ENCODE measurements at regions of chr7 and their contacts with region 1.

Region 1: DNA sequence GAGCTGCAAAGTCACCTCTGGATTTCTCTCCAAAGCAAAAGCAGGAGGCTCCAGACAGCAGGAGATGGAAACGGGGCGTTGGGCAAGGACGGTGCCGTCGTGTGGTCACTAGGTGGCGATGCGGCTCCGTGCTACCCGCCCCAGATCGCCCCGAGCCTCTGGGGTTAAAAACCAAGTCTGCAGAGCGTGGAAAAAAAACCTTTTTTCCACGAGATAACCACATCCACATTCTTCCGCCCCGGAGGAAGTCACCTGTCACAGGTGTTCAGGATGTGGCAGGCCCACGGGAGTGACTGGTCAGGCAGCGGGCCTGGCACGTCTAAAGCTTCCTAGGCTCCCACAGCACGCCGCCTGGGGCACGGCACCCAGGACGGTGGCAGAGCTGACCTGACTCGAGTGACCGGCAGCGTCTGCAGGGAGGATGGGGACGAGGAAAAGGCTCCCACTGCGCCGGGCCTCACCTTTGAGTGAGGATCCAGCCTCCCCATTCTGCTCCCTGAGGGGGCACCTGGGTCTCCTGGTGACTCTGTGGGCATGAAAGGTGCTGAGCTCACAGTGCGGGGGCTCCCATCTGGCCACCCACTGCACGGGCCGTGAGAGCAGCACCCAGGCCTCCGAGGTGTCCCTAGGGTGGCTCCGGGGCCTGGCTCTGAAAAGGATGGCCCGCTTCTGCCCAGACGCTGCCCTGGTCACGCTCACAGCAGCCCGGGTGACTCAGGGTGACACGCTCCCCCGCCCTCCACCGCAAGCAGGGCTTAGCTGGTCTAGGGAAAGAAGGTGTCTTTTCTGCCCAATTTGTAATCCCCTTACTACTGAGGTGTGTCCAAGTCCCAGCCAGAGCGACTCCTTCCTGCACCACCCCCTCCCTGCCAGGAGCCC is 71.3 kb upstream of the TNRC18 start:
- DNase-seq: peak; percentile 82
- H3K4me3 Mint-ChIP-seq: peak overlapping the region; percentile 39
- H3K27ac Mint-ChIP-seq: no peak overlapping the region
- H3K4me1 Mint-ChIP-seq: peaks cover 13% of the 10 kb centered on the region
- H3K27me3 Mint-ChIP-seq: no peaks in the 10 kb centered on the region
- CTCF ChIP-seq: peak; percentile 97

Region 2: DNA sequence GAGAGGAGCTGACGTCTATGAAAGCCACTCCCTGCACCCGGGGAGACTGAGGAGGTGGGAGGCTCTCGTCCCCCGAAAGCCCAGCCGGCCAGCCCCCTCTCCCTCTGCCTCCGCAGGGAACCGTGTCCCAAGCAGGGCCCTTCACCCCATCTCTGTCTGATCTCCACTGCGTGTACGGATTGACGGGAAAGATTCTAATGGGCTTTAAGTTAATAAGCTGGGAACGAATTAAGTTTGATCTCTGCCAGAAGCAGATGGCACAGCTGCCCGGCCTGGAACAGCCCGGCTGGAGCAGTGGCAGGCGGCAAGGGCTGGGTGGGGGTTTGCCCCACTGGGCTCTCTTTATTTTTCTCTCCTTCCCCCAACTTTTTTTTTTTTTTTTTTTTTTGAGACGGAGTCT is 218.3 kb before region 1 on chr7:
- CTCF ChIA-PET with region 1: no interaction called
- POLR2A ChIA-PET with region 1: no interaction called
- intact Hi-C with region 1: no loop called
- DNase-seq: no peak
- H3K4me3 Mint-ChIP-seq: no peak overlapping the region
- H3K27ac Mint-ChIP-seq: no peak overlapping the region
- H3K4me1 Mint-ChIP-seq: no peaks in the 10 kb centered on the region
- H3K27me3 Mint-ChIP-seq: peaks cover 11% of the 10 kb centered on the region
- CTCF ChIP-seq: no peak

Region 3: GRCh38 chr7:5351507-5352265 is 143.2 kb before region 1 on chr7:
- CTCF ChIA-PET with region 1: no interaction called
- POLR2A ChIA-PET with region 1: no interaction called
- intact Hi-C with region 1: no loop called
- DNase-seq: no peak
- H3K4me3 Mint-ChIP-seq: no peak overlapping the region
- H3K27ac Mint-ChIP-seq: no peak overlapping the region
- H3K4me1 Mint-ChIP-seq: peaks cover 12% of the 10 kb centered on the region
- H3K27me3 Mint-ChIP-seq: no peaks in the 10 kb centered on the region
- CTCF ChIP-seq: no peak

Region 4: DNA sequence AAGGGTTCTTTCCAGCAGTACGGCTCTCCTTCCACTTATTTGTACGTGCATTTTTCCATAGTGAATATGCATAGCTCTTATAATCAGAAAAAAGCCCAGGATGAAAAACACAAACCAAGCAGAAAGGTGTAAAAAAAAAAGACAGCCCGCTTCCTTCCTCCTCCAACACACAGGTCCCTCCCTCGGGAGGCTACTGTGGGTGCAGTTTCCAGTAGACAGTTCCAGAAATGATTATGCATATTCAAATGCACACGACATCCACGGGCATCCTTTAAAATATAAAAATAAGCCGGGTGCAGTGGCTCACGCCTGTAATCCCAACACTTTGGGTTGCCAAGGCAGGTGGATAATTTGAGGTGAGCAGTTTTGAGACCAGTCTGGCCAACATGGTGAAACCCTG is 131.2 kb before region 1 on chr7:
- CTCF ChIA-PET with region 1: interaction called, 10 read pairs
- POLR2A ChIA-PET with region 1: no interaction called
- intact Hi-C with region 1: no loop called
- DNase-seq: no peak
- H3K4me3 Mint-ChIP-seq: no peak overlapping the region
- H3K27ac Mint-ChIP-seq: no peak overlapping the region
- H3K4me1 Mint-ChIP-seq: no peaks in the 10 kb centered on the region
- H3K27me3 Mint-ChIP-seq: no peaks in the 10 kb centered on the region
- CTCF ChIP-seq: no peak

Region 5: DNA sequence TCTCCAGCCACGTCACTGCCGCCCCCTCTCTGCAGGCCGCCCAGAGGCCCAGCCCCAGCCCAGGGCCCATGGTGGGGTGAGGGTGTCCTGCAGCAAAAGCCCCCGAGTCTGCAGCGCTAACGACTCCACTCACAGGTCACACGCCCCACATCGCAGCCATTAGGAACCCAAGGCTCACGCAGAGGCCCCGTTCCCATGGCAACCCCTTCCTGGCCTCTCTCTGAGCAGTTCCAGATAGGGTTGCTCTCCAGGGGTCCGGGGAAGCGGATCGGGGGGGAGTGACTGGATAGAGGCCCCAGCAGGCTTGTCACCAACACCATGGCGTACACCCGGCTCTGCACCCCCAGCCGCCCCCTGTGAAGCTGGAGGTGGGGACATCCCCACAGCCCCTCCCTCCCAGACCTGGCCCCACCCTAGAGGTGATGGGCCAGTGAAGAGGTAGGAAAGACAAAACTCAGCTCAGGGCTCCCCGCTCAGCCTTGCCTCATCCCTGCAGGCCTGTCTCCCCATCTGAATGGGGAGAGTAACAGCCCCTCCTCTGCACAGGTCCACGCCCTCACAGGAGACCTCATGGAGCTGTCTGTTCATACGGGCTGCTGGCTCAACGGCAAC is 112.5 kb before region 1 on chr7:
- CTCF ChIA-PET with region 1: no interaction called
- POLR2A ChIA-PET with region 1: no interaction called
- intact Hi-C with region 1: no loop called
- DNase-seq: no peak
- H3K4me3 Mint-ChIP-seq: no peak overlapping the region
- H3K27ac Mint-ChIP-seq: no peak overlapping the region
- H3K4me1 Mint-ChIP-seq: peaks cover 7% of the 10 kb centered on the region
- H3K27me3 Mint-ChIP-seq: no peaks in the 10 kb centered on the region
- CTCF ChIP-seq: no peak

Region 6: GRCh38 chr7:5526100-5526905 is 31.4 kb after region 1 on chr7:
- CTCF ChIA-PET with region 1: interaction called, 11 read pairs
- POLR2A ChIA-PET with region 1: interaction called, 10 read pairs
- intact Hi-C with region 1: no loop called
- DNase-seq: peak; percentile 81
- H3K4me3 Mint-ChIP-seq: peak overlapping the region; percentile 35
- H3K27ac Mint-ChIP-seq: peak overlapping the region; percentile 91
- H3K4me1 Mint-ChIP-seq: peaks cover 31% of the 10 kb centered on the region
- H3K27me3 Mint-ChIP-seq: no peaks in the 10 kb centered on the region
- CTCF ChIP-seq: peak; percentile 16

Region 7: GRCh38 chr7:5557920-5558401 is 63.0 kb after region 1 on chr7:
- CTCF ChIA-PET with region 1: interaction called, 5 read pairs
- POLR2A ChIA-PET with region 1: interaction called, 7 read pairs
- intact Hi-C with region 1: loop called (anchors 1 kb)
- DNase-seq: peak; percentile 67
- H3K4me3 Mint-ChIP-seq: peak overlapping the region; percentile 66
- H3K27ac Mint-ChIP-seq: peak overlapping the region; percentile 73
- H3K4me1 Mint-ChIP-seq: peaks cover 23% of the 10 kb centered on the region
- H3K27me3 Mint-ChIP-seq: no peaks in the 10 kb centered on the region
- CTCF ChIP-seq: no peak

Region 8: DNA sequence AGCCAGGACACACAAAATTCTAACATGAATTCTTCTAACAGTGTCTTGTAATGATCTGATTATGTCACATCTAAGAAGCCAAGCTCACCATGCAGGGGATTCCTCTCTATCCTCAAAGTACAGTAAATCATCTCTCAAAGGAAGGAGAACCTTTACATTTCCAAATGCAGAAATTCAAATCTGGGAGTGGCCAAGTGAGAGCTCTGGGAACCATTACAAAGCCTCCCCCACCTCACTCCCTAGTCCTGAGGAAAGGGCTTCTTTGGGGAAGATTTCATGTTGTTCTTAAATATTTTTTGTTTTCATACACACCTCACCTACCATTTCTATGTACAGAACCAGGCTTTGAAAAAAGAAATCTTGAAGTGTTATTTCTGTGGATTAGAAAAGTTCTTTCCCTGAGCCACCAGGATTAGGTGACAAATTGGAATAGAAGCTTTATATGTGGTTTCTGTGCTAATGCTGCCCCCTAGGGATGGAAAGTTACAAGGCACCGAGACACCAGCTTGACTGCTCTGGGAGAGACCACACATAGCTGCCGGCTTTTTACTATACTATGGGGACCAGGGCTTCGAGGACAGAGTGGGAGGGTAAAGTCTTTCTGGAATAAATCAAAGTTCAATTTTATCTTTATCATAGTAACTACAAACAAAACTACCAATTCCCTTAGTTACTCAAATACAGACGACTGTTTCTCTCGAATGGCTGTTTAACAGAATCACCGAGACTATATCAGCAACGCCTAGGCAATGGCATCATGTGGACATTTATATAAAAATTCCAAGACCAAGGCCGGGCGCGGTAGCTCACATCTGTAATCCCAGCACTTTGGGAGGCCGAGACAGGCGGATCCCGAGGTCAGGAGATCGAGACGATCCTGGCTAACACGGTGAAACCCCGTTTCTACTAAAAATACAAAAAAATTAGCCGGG is 170.4 kb after region 1 on chr7:
- CTCF ChIA-PET with region 1: interaction called, 63 read pairs
- POLR2A ChIA-PET with region 1: interaction called, 6 read pairs
- intact Hi-C with region 1: loop called (anchors 1 kb)
- DNase-seq: peak; percentile 84
- H3K4me3 Mint-ChIP-seq: no peak overlapping the region
- H3K27ac Mint-ChIP-seq: no peak overlapping the region
- H3K4me1 Mint-ChIP-seq: no peaks in the 10 kb centered on the region
- H3K27me3 Mint-ChIP-seq: no peaks in the 10 kb centered on the region
- CTCF ChIP-seq: peak; percentile 91

Region 9: DNA sequence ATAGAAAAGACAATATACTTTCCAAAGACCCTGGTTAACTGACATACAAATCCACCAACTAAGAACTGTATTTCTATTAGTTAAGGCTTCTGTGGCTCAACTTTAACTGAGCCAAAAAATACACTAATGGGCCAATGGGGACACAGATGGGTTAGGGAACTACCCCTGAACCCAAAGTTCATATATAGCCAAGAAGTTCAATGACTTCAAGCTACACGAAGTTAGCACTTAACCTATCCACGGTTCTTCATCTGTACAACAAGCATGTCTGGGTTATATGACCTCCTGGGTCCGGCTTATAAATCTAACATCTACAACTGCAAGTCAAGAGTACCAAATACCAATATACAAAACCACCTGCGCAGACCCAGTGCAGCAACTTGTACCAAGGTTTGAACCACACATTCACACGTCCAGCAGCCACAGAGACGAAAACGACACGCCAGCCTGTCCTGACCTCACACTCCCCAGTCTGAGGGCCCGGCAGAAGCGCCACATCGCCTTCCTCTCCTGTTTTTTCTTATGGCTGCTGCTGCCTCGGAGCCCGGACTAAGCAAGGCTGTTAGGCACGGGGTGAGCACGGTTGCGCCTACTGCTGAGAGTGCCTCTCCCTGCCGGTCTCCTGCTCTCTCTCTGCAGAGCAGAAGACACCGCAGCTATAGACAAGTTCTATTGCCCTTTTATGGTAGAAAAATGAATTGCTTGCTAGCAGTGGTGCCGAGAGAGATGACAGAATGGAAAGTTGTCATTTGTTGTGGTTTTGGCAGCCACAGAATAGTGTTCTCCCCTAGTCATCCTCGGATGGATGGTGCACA is 200.2 kb after region 1 on chr7:
- CTCF ChIA-PET with region 1: interaction called, 11 read pairs
- POLR2A ChIA-PET with region 1: interaction called, 3 read pairs
- intact Hi-C with region 1: no loop called
- DNase-seq: no peak
- H3K4me3 Mint-ChIP-seq: no peak overlapping the region
- H3K27ac Mint-ChIP-seq: no peak overlapping the region
- H3K4me1 Mint-ChIP-seq: peaks cover 47% of the 10 kb centered on the region
- H3K27me3 Mint-ChIP-seq: no peaks in the 10 kb centered on the region
- CTCF ChIP-seq: no peak